A673 (cell line): ENCODE measurements at regions of chr11 and their contacts with region 1.

Region 1: GRCh38 chr11:92071660-92072059 is 153.0 kb upstream of the FAT3 start:
- DNase-seq: no peak
- H3K4me3 ChIP-seq: no peak overlapping the region
- H3K27ac ChIP-seq: no peak overlapping the region
- H3K4me1 ChIP-seq: no peaks in the 10 kb centered on the region
- H3K27me3 ChIP-seq: no peaks in the 10 kb centered on the region
- CTCF ChIP-seq: no peak

Region 2: DNA sequence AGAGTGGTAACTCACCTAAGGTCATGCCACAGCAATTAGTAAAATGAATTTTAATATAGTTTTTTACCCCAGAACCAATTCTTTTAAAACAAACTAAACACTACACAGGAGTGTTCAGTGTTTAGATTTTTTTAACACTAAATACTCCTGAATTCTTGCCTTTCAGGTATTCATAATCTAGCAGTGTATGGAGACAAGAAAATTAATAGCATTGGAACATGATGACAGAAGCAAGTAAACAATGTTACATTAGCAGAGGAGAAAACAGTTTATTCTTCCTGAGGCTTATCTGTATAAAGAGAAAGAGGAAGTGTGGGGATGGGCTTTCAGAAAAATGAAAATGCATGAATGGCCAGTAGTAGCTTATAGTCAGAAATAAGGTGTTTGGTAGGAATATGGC is 69.1 kb before region 1 on chr11:
- CTCF ChIA-PET with region 1: no interaction called
- POLR2A ChIA-PET with region 1: no interaction called
- intact Hi-C with region 1: no loop called
- DNase-seq: no peak
- H3K4me3 ChIP-seq: no peak overlapping the region
- H3K27ac ChIP-seq: no peak overlapping the region
- H3K4me1 ChIP-seq: no peaks in the 10 kb centered on the region
- H3K27me3 ChIP-seq: no peaks in the 10 kb centered on the region
- CTCF ChIP-seq: no peak

Region 3: DNA sequence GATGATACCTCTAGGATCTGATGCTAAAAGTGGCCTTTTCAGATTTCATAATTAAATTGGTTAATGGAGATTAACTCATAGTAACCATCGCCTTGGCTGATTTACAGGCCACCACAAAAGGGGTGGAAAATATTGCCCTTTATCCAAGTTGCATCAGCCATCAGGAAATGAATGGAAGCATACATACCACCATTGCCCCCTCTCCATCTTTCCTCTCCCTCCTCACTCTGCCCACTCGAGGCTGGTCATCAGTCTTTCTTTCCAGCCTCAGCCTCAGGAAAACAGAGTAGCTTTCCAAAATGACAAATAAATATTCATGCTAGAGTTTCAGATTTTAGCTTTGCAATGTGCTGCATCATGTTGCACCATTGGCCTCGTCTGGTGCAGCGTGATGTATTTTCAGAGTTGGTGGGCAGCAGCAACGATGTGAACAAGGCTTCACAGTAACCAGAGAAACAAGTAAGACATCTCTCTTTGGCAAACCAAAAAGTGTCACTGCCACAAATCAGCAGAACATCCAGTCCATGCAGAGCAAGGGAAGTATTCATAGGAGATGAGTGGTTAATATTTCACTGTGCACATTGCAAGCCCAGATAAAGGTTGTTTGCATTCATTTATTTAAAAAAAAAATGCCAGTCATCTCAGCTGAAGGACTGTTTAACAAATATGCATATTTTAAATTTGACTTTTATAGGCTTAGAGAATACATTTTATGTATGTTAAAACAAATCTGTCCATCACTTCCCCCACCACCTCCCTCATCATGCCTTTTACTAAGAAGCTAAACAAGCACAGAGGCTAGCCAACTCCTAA is 16.3 kb after region 1 on chr11:
- CTCF ChIA-PET with region 1: no interaction called
- POLR2A ChIA-PET with region 1: no interaction called
- intact Hi-C with region 1: loop called (anchors 1 kb)
- DNase-seq: no peak
- H3K4me3 ChIP-seq: no peak overlapping the region
- H3K27ac ChIP-seq: no peak overlapping the region
- H3K4me1 ChIP-seq: no peaks in the 10 kb centered on the region
- H3K27me3 ChIP-seq: no peaks in the 10 kb centered on the region
- CTCF ChIP-seq: no peak

Region 4: GRCh38 chr11:92269021-92269420 is 197.4 kb after region 1 on chr11:
- CTCF ChIA-PET with region 1: no interaction called
- POLR2A ChIA-PET with region 1: no interaction called
- intact Hi-C with region 1: no loop called
- DNase-seq: no peak
- H3K4me3 ChIP-seq: no peak overlapping the region
- H3K27ac ChIP-seq: no peak overlapping the region
- H3K4me1 ChIP-seq: no peaks in the 10 kb centered on the region
- H3K27me3 ChIP-seq: no peaks in the 10 kb centered on the region
- CTCF ChIP-seq: no peak